ENCODE measurements at regions of chr16 and their contacts with region 1.

Region 1: GRCh38 chr16:17467923-17468540 is 2.7 kb downstream of the XYLT1 start:
- DNase-seq: peak; percentile 63
- ATAC-seq: peak; percentile 75

Region 2: DNA sequence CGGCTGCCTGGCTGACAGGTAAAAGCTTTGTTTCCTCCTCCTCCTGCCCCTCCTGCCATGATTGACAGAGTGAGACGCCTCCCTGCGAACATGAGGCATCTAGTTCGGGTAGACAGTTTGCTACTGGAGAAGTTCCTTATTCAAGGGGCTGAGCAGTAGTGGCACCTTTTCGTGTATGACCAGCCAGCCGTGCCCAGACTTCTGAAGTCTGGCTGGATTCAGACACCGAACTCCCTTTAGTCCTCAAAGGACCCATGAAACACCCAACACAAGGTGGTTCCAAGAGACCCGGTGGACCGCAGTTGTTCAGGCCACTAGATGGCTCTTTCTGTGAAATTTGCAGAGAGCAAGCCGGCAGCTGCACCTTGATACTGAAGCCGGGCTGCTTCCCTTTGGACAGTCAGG is 190.1 kb before region 1 on chr16:
- intact Hi-C with region 1: loop called (anchors 5 kb)
- DNase-seq: peak; percentile 61
- ATAC-seq: peak; percentile 74

Region 3: GRCh38 chr16:17483351-17483750 is 15.3 kb after region 1 on chr16:
- intact Hi-C with region 1: no loop called
- DNase-seq: no peak
- ATAC-seq: no peak